Breast epithelium (tissue), 4 donors: ENCODE measurements at regions of chr1 and their contacts with region 1.

Region 1: DNA sequence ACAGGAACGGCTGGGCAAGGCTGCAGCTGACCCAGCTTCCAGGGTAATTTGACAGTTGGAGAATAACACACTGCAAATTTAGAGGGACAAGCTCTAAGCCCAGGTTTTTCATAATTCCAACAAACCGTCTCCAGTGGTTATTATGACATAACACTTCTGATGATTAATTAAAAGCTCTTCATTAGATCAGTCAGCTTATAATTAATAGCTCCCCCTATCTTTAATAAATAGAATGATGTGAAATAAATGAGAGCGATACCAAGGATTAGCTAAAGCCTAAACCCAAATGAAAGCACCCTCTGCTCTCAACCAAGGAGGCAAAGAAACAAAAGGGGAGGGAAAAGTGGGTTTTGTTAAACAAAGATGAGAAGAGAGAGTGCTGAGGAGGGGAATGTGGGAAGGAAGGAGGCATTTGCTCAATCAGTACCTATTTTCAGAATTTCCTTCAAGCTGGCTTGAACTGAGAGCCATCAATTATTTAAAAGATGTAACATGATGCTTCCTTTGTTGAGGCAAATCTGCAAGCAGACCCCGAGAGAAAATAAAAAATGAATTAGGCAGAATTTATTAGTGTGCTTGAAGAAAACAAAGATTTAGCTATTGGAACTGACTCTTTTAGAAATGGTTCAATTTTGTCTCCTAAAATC is 221.8 kb upstream of the ESRRG start:
- DNase-seq: no peak
- H3K4me3 ChIP-seq: no peak overlapping the region
- H3K27ac ChIP-seq: no peak overlapping the region
- H3K4me1 ChIP-seq: no peaks in the 10 kb centered on the region
- H3K27me3 ChIP-seq: no peaks in the 10 kb centered on the region
- CTCF ChIP-seq: no peak
- POLR2A ChIP-seq: no peak

Region 2: DNA sequence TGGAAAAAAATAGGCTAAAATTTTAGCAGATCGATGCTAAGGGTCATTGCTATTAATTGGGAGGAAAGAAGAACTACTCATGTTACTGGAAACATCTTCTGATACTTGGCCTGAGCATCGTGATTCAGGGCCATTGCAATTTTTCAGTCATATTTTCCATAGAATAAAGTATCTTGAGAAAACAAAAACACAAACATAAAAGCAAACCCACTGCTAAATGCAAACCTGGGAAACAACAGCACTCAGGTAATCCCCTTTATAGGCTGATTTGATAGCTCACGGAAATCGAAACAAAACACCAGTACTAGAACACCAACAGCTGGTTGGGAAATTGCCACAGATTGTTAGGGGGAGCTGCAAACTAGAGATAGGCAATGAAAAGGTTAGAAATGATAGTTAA is 48.8 kb before region 1 on chr1:
- intact Hi-C with region 1: loop called (anchors 2 kb)
- DNase-seq: no peak
- H3K4me3 ChIP-seq: no peak overlapping the region
- H3K27ac ChIP-seq: no peak overlapping the region
- H3K4me1 ChIP-seq: no peaks in the 10 kb centered on the region
- H3K27me3 ChIP-seq: no peaks in the 10 kb centered on the region
- CTCF ChIP-seq: no peak
- POLR2A ChIP-seq: no peak

Region 3: GRCh38 chr1:217453816-217454215 is 508.8 kb after region 1 on chr1:
- intact Hi-C with region 1: no loop called
- DNase-seq: no peak
- H3K4me3 ChIP-seq: no peak overlapping the region
- H3K27ac ChIP-seq: no peak overlapping the region
- H3K4me1 ChIP-seq: no peaks in the 10 kb centered on the region
- H3K27me3 ChIP-seq: no peaks in the 10 kb centered on the region
- CTCF ChIP-seq: no peak
- POLR2A ChIP-seq: no peak